Heart left ventricle (tissue), 16 donors: ENCODE measurements at regions of chr12 and their contacts with region 1.

Region 1: DNA sequence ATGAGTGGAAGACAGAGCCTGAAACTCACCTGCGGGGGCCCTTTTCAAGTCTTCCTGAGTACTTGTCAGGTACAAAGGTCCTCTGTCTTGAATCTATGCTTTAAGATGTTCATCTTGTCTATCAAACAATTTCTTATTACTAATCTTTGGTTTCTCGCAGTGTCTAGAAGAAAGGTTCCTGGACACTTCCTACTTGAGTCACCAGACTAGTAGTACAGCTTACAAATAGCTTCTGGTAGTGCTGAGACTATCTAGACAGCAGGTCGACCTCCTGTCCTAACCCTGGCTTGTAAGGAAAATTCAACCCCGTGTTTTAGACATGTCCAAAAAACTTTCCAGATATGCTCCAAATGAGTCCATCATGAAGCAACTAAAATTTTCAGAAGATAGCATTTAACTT is 11.2 kb upstream of the ARID2 start:
- DNase-seq: no peak
- ATAC-seq: no peak
- H3K4me3 ChIP-seq: no peak overlapping the region
- H3K27ac ChIP-seq: no peak overlapping the region
- H3K4me1 ChIP-seq: peaks cover 0 to 58% (median 26%) of the 10 kb centered on the region in 12 donors
- H3K27me3 ChIP-seq: no peaks in the 10 kb centered on the region
- CTCF ChIP-seq: no peak
- POLR2A ChIP-seq: no peak

Region 2: DNA sequence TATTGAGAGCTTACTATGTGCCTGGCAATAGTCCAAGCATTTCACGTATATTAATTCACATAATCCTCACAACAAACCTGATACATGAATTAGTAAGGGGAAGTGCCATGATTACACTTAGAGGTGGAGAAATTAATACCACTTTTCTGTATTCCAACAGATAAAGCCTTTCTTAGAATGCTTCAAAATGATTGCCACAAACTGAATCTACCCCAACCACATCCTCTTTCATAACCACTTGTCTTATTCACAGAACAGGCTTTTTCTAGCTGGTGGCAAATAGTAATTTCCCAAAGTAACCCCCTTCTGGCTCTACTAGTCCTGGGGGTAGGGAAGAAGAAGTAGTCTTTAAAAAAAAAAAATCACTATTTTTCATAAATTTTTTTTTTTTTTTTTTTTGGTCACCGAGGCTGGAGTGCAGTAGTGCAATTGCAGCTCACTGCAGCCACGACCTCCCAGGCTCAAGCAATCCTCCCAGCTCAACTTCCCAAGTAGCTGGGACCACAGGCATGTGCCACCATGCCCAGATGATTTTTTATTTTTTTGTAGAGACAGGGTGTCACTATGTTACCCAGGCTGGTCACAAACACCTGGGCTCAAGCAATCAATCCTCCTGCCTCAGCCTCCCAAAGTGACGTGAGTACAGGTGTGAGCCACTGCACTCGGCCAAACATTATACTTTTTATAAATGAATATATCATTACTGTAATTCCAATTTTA is 47.8 kb before region 1 on chr12:
- intact Hi-C with region 1: loop called in 1 of 10 experiments (anchors 5 kb)
- DNase-seq: no peak
- ATAC-seq: no peak
- H3K4me3 ChIP-seq: no peak overlapping the region
- H3K27ac ChIP-seq: peak overlapping the region in 10 of 12 donors; percentile 3 to 83 (median 66)
- H3K4me1 ChIP-seq: peaks cover 0 to 43% (median 9%) of the 10 kb centered on the region in 12 donors
- H3K27me3 ChIP-seq: no peaks in the 10 kb centered on the region
- CTCF ChIP-seq: no peak
- POLR2A ChIP-seq: no peak

Region 3: GRCh38 chr12:45775964-45776363 is 57.7 kb after region 1 on chr12:
- intact Hi-C with region 1: no loop called
- DNase-seq: no peak
- ATAC-seq: peak in 1 of 4 donors; percentile 39
- H3K4me3 ChIP-seq: no peak overlapping the region
- H3K27ac ChIP-seq: peak overlapping the region in 4 of 12 donors; percentile 9 to 60 (median 16)
- H3K4me1 ChIP-seq: peaks cover 0 to 34% (median 19%) of the 10 kb centered on the region in 12 donors
- H3K27me3 ChIP-seq: no peaks in the 10 kb centered on the region
- CTCF ChIP-seq: no peak
- POLR2A ChIP-seq: no peak

Region 4: DNA sequence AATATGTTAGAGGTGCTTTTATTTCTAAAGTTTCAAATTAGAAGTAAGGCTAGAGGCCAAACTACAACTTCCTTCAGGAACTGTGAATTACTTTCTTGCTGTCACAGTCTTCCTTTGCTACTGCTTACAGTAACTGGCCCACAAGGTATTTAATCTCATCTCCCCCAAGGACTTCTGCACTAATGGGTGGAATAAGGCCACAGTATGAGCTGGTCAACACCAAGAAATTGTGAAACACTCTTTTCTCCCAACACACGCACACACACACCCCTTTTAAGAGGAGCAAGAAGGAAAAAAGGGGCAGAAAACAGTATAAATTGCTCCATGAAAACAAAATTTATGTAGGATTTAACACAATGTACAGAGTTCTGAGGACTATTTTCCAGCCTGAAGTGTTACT is 226.5 kb after region 1 on chr12:
- intact Hi-C with region 1: no loop called
- DNase-seq: no peak
- ATAC-seq: no peak
- H3K4me3 ChIP-seq: no peak overlapping the region
- H3K27ac ChIP-seq: no peak overlapping the region
- H3K4me1 ChIP-seq: peaks cover 0 to 4% (median 0%) of the 10 kb centered on the region in 12 donors
- H3K27me3 ChIP-seq: no peaks in the 10 kb centered on the region
- CTCF ChIP-seq: no peak
- POLR2A ChIP-seq: no peak